Mammary epithelial cell (primary cell): ENCODE measurements at regions of chr7 and their contacts with region 1.

Region 1: DNA sequence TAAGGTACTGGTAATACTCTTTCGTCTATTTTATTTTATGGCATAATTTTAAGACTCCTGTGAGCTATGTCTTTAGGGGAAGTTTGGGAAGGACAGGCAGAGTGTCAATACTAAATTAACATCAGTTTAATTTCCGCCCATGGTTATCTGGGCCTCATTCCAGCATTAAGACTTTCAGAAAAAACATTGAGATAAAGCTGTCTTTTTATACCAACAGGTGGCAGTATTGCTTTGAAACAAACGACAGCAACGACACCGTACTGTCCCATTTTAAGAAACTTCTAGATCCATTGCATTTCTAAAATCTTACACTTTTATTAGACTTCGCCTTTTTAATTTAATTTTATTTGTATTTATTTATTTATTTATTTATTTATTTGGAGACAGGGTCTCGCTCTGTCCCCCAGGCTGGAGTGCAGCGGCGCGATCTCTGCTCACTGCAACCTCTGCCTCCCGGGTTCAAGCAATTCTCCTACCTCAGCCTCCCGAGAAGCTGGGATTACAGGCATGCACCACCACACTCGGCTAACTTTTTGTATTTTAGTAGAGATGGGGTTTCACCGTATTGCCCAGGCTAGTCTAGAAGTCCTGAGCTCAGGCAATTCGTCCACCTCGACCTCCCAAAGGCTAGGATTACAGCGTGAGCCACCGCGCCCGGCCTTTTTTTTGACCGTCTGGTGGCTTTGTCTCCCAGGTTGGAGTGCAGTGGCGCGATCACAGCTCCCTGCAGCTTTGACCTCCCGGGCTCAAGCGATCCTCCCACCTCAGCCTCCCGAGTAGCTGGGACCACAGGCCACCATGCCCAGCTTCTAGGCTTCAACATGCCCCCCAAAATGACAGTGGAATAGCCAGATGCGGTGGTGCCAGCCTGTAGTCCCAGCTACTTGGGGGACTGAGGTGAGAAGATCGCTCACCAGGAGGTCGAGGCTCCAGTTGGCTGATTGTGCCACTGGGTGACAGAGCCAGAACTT is 78.7 kb upstream of the C1GALT1 start:
- DNase-seq: peak; percentile 58
- H3K4me3 ChIP-seq: no peak overlapping the region
- H3K27ac ChIP-seq: peak overlapping the region; percentile 10
- H3K4me1 ChIP-seq: peaks cover 32% of the 10 kb centered on the region
- H3K27me3 ChIP-seq: no peaks in the 10 kb centered on the region
- CTCF ChIP-seq: peak; percentile 52 to 68

Region 2: DNA sequence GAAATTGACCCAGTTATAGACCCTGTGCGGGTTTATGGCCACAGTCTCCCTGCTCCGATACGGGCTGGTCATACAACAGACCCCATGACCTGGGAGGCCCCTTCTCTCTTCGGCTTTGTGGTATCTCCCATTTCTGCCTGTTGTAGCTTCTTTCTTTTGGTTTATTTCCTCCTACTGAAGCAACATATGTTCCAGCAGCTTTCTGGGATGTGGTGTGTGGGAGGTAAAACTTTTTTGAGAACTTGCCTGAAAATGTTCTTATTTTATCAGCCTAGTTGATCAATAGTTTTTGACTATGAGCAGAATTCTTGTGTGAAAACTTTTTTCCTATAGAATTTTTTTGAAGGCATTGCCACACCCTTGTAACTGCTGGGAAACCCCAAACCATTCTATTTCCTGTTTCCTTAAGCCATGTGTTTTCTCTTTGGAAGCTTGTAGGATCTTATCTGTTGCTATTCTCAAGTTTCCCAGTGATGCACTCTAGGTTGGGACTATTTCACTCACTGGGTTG is 735.9 kb before region 1 on chr7:
- CTCF ChIA-PET with region 1: no interaction called
- dilution Hi-C with region 1: no loop called
- in situ Hi-C with region 1: no loop called
- intact Hi-C with region 1: no loop called
- DNase-seq: peak; percentile 61
- H3K4me3 ChIP-seq: no peak overlapping the region
- H3K27ac ChIP-seq: no peak overlapping the region
- H3K4me1 ChIP-seq: no peaks in the 10 kb centered on the region
- H3K27me3 ChIP-seq: no peaks in the 10 kb centered on the region
- CTCF ChIP-seq: no peak

Region 3: GRCh38 chr7:7122701-7123281 is 19.2 kb after region 1 on chr7:
- CTCF ChIA-PET with region 1: no interaction called
- dilution Hi-C with region 1: no loop called
- in situ Hi-C with region 1: no loop called
- intact Hi-C with region 1: no loop called
- DNase-seq: peak; percentile 82
- H3K4me3 ChIP-seq: no peak overlapping the region
- H3K27ac ChIP-seq: no peak overlapping the region
- H3K4me1 ChIP-seq: no peaks in the 10 kb centered on the region
- H3K27me3 ChIP-seq: no peaks in the 10 kb centered on the region
- CTCF ChIP-seq: no peak

Region 4: GRCh38 chr7:7257899-7258692 is 154.5 kb after region 1 on chr7:
- CTCF ChIA-PET with region 1: no interaction called
- dilution Hi-C with region 1: no loop called
- in situ Hi-C with region 1: loop called in 1 of 2 experiments (anchors 25 kb)
- intact Hi-C with region 1: loop called (anchors 5 kb)
- DNase-seq: no peak
- H3K4me3 ChIP-seq: no peak overlapping the region
- H3K27ac ChIP-seq: no peak overlapping the region
- H3K4me1 ChIP-seq: no peaks in the 10 kb centered on the region
- H3K27me3 ChIP-seq: no peaks in the 10 kb centered on the region
- CTCF ChIP-seq: no peak

Region 5: GRCh38 chr7:7352845-7353244 is 249.2 kb after region 1 on chr7:
- CTCF ChIA-PET with region 1: interaction called, 4 read pairs
- dilution Hi-C with region 1: no loop called
- in situ Hi-C with region 1: loop called in 1 of 2 experiments (anchors 5 kb)
- intact Hi-C with region 1: loop called (anchors 1 kb)
- DNase-seq: peak; percentile 78
- H3K4me3 ChIP-seq: no peak overlapping the region
- H3K27ac ChIP-seq: no peak overlapping the region
- H3K4me1 ChIP-seq: peaks cover 7% of the 10 kb centered on the region
- H3K27me3 ChIP-seq: no peaks in the 10 kb centered on the region
- CTCF ChIP-seq: peak; percentile 46 to 73

Region 6: GRCh38 chr7:7424151-7424873 is 320.7 kb after region 1 on chr7:
- CTCF ChIA-PET with region 1: no interaction called
- dilution Hi-C with region 1: no loop called
- in situ Hi-C with region 1: no loop called
- intact Hi-C with region 1: loop called (anchors 2 kb)
- DNase-seq: peak; percentile 51
- H3K4me3 ChIP-seq: peak overlapping the region; percentile 32 to 51 (median 45)
- H3K27ac ChIP-seq: no peak overlapping the region
- H3K4me1 ChIP-seq: no peaks in the 10 kb centered on the region
- H3K27me3 ChIP-seq: no peaks in the 10 kb centered on the region
- CTCF ChIP-seq: peak; percentile 88

Region 7: DNA sequence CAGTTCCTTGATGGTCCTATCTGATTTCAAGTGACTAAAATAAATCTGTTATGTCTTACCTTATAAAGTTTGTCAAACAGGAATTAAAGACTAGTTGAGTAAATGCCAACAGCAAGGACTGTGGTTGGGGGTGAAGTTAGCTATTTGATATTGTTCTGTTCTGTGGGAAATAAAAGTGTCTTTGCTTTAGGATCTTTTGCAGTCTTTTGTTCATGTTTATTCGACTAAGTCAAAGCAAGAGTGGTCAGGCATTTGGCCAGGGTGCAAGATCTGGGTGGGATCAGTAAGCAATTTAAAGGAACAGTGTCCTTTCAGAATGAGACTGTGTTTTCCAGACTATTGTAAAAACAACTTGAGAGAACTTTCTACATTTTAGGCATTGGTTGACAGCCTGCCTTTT is 432.1 kb after region 1 on chr7 and contains the start of gene COL28A1:
- CTCF ChIA-PET with region 1: no interaction called
- dilution Hi-C with region 1: no loop called
- in situ Hi-C with region 1: loop called in 1 of 2 experiments (anchors 25 kb)
- intact Hi-C with region 1: loop called (anchors 2 kb)
- DNase-seq: no peak
- H3K4me3 ChIP-seq: no peak within 1 kb of the TSS
- H3K27ac ChIP-seq: no peak within 1 kb of the TSS
- H3K4me1 ChIP-seq: no peaks in the 10 kb centered on the region
- H3K27me3 ChIP-seq: no peaks in the 10 kb centered on the region
- CTCF ChIP-seq: no peak
- total RNA-seq, gene COL28A1: 0.16 to 0.17 TPM